ENCODE measurements at regions of chr6 and their contacts with region 1.

Region 1: GRCh38 chr6:26204332-26205165 is 117.3 kb downstream of the HFE start:
- DNase-seq: peak; percentile 92 to 96
- ATAC-seq: peak; percentile 95
- H3K4me3 ChIP-seq: peak overlapping the region; percentile 62 to 68
- H3K27ac ChIP-seq: peak overlapping the region; percentile 10 to 100
- H3K4me1 ChIP-seq: no peaks in the 10 kb centered on the region
- H3K27me3 ChIP-seq: peaks cover 0 to 2% of the 10 kb centered on the region in 2 donors

Region 2: GRCh38 chr6:26175428-26176181 is 28.9 kb before region 1 on chr6:
- intact Hi-C with region 1: loop called in 1 of 2 experiments (anchors 5 kb)
- DNase-seq: no peak
- ATAC-seq: no peak
- H3K4me3 ChIP-seq: no peak overlapping the region
- H3K27ac ChIP-seq: no peak overlapping the region
- H3K4me1 ChIP-seq: peaks cover 0 to 1% of the 10 kb centered on the region in 2 donors
- H3K27me3 ChIP-seq: no peaks in the 10 kb centered on the region

Measured in aorta (tissue), 5 donors.